ENCODE measurements at regions of chr13 and their contacts with region 1.

Region 1: DNA sequence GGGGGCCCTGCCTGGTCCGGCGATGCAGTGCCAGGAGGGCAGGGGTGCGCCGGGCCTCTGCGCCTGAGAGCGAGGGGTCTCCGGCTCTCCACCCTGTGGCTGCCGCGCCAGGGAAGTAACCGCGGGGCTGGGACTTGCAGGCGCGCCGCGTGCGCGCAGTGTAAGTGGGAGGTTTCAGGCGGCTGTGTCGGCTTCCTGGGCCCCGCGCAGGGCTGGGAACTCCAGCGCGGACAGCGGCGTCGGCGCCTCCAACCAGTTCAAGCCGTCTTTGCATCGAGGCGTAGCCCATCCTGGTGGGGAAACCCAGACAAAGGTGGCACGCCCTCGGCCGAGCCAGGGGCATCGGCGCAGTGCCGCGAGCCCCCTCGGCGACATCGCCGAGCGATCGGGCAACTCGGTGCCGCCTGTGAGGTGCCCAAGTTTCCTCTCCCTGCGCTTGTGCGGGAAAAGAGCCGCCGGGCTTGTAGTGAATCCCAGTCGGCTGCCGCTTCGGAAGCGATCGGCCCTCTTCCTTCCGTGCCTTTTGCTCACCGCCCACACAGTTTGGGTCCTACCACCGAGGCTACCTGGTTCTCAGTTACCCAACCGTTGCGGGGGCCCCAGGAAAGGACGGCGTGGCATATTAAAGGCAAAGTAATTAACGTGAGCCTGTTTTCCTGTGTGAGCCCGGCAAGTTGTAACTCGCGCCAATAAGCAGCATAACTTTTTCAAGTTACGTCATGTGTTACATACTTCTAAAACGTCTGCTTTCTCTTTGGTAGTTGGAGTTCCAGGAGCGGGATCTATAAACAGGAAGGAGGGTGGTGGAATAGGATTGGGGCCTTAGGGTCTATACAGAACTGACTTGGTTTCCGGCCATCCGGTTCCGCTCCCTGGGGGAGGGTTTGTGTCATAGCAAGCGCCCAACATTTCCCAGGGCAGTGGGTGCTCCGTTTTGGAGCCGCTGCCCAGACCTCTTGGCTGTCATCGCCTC is 1.2 kb downstream of the LRCH1 start:
- DNase-seq: peak; percentile 29 to 91 (median 66)
- ATAC-seq: peak; percentile 54
- H3K4me3 ChIP-seq: peak overlapping the region; percentile 87 to 95
- H3K4me3 Mint-ChIP-seq: peak overlapping the region; percentile 93
- H3K27ac ChIP-seq: peak overlapping the region; percentile 70 to 83
- H3K27ac Mint-ChIP-seq: peak overlapping the region; percentile 94
- H3K4me1 ChIP-seq: peaks cover 28% of the 10 kb centered on the region
- H3K4me1 Mint-ChIP-seq: peaks cover 53% of the 10 kb centered on the region
- H3K27me3 ChIP-seq: no peaks in the 10 kb centered on the region
- H3K27me3 Mint-ChIP-seq: no peaks in the 10 kb centered on the region
- CTCF ChIP-seq: no peak

Region 2: DNA sequence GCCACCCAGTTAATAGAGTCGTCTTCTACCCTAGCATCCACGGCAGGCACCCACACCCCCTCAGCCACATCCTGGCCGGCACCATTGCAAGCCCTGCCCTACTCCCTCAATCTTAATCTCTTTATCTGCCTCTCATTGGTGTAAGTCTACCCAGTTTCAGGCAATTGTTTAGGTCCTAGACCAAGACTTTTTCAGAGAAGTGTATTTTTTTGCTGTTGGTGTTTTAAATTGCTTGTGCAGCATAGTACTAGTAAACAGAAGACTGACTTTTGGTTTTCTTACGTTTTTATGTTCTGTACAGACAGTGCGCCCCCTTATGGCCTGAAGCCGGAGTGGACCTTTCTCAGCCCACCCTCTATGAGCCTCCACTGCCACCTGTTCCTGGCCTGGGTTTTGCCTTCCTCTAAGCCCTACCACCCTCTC is 369.9 kb before region 1 on chr13:
- CTCF ChIA-PET with region 1: no interaction called
- POLR2A ChIA-PET with region 1: no interaction called
- intact Hi-C with region 1: loop called (anchors 5 to 10 kb)
- DNase-seq: peak; percentile 57 to 89 (median 77)
- ATAC-seq: peak; percentile 57
- H3K4me3 ChIP-seq: peak overlapping the region; percentile 31 to 32
- H3K4me3 Mint-ChIP-seq: peak overlapping the region; percentile 96
- H3K27ac ChIP-seq: peak overlapping the region; percentile 23 to 94
- H3K27ac Mint-ChIP-seq: peak overlapping the region; percentile 95
- H3K4me1 ChIP-seq: peaks cover 30% of the 10 kb centered on the region
- H3K4me1 Mint-ChIP-seq: peaks cover 37% of the 10 kb centered on the region
- H3K27me3 ChIP-seq: no peaks in the 10 kb centered on the region
- H3K27me3 Mint-ChIP-seq: no peaks in the 10 kb centered on the region
- CTCF ChIP-seq: peak; percentile 74

Region 3: DNA sequence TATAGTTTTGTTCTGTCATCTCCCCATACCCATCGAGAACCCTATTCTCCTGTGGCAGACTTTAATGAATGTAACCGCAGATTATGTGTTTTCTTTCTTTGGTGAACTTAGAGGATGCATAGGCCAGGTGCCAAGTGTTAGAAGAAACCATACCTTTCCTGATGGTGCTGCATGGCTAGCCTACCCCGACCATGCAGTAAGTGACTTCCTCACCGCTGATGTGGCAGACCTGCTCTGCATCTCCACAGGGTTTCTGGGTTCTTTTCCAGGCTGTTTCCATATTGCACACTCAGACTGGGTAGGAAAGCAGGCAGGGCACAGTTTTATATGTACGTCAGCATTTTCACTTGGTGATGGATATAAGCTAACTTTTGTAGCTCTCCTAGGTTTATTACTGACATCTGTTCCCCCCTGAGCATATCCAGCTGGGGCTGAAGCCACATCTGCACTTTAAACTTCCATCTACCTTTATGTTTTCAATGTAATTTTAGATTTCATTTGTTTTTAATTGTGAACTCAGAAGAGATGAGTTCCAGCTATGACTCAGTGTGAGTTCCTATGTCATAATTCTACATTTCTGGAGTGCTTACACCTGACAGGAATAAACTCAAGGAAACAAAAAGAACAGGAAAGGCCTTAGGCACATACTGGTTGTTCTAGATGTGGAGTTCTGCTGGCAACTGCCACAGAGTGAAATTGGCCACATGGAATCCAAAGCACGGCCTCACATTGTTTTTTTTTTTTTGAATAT is 41.1 kb after region 1 on chr13:
- CTCF ChIA-PET with region 1: interaction called, 6 read pairs
- POLR2A ChIA-PET with region 1: no interaction called
- intact Hi-C with region 1: loop called (anchors 2 kb)
- DNase-seq: no peak
- ATAC-seq: no peak
- H3K4me3 ChIP-seq: no peak overlapping the region
- H3K4me3 Mint-ChIP-seq: no peak overlapping the region
- H3K27ac ChIP-seq: no peak overlapping the region
- H3K27ac Mint-ChIP-seq: no peak overlapping the region
- H3K4me1 ChIP-seq: peaks cover 58% of the 10 kb centered on the region
- H3K4me1 Mint-ChIP-seq: peaks cover 90% of the 10 kb centered on the region
- H3K27me3 ChIP-seq: no peaks in the 10 kb centered on the region
- H3K27me3 Mint-ChIP-seq: no peaks in the 10 kb centered on the region
- CTCF ChIP-seq: no peak

Region 4: GRCh38 chr13:46687810-46688209 is 133.6 kb after region 1 on chr13:
- CTCF ChIA-PET with region 1: interaction called, 16 read pairs
- POLR2A ChIA-PET with region 1: no interaction called
- intact Hi-C with region 1: no loop called
- DNase-seq: peak in 4 of 9 experiments; percentile 15 to 51 (median 32)
- ATAC-seq: peak; percentile 69
- H3K4me3 ChIP-seq: no peak overlapping the region
- H3K4me3 Mint-ChIP-seq: no peak overlapping the region
- H3K27ac ChIP-seq: no peak overlapping the region
- H3K27ac Mint-ChIP-seq: no peak overlapping the region
- H3K4me1 ChIP-seq: peaks cover 5% of the 10 kb centered on the region
- H3K4me1 Mint-ChIP-seq: peaks cover 9% of the 10 kb centered on the region
- H3K27me3 ChIP-seq: no peaks in the 10 kb centered on the region
- H3K27me3 Mint-ChIP-seq: no peaks in the 10 kb centered on the region
- CTCF ChIP-seq: no peak

Region 5: GRCh38 chr13:46726347-46726746 is 172.2 kb after region 1 on chr13:
- CTCF ChIA-PET with region 1: interaction called, 94 read pairs
- POLR2A ChIA-PET with region 1: interaction called, 3 read pairs
- intact Hi-C with region 1: loop called (anchors 1 kb)
- DNase-seq: peak in 3 of 9 experiments; percentile 23 to 43 (median 31)
- ATAC-seq: no peak
- H3K4me3 ChIP-seq: no peak overlapping the region
- H3K4me3 Mint-ChIP-seq: no peak overlapping the region
- H3K27ac ChIP-seq: no peak overlapping the region
- H3K27ac Mint-ChIP-seq: no peak overlapping the region
- H3K4me1 ChIP-seq: no peaks in the 10 kb centered on the region
- H3K4me1 Mint-ChIP-seq: no peaks in the 10 kb centered on the region
- H3K27me3 ChIP-seq: no peaks in the 10 kb centered on the region
- H3K27me3 Mint-ChIP-seq: no peaks in the 10 kb centered on the region
- CTCF ChIP-seq: no peak

Region 6: DNA sequence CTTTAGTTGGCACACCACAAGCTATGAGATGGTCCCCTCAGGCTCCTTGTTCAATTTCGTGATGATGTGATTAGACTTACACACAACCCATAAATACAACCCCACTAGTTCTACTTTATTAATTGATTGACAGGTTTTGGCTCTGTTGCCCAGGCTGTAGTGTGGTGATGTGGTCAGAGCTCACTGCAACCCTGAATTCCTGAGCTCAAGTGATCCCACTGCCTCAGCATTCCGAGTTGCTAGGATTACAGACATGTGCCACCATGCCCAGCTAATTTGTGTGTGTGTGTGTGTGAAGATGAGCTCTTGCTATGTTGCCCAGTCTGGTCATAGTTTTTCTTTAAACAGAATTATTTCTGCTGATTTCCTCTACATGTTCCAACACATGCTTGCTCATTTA is 360.2 kb after region 1 on chr13:
- CTCF ChIA-PET with region 1: no interaction called
- POLR2A ChIA-PET with region 1: no interaction called
- intact Hi-C with region 1: no loop called
- DNase-seq: no peak
- ATAC-seq: no peak
- H3K4me3 ChIP-seq: no peak overlapping the region
- H3K4me3 Mint-ChIP-seq: no peak overlapping the region
- H3K27ac ChIP-seq: no peak overlapping the region
- H3K27ac Mint-ChIP-seq: no peak overlapping the region
- H3K4me1 ChIP-seq: no peaks in the 10 kb centered on the region
- H3K4me1 Mint-ChIP-seq: no peaks in the 10 kb centered on the region
- H3K27me3 ChIP-seq: peaks cover 0 to 3% of the 10 kb centered on the region in 2 experiments
- H3K27me3 Mint-ChIP-seq: peaks cover 5% of the 10 kb centered on the region
- CTCF ChIP-seq: no peak

Measured in CD8-positive, alpha-beta T cell (primary cell).